ENCODE measurements at regions of chr4 and their contacts with region 1.

Region 1: GRCh38 chr4:90099812-90100211 is 27.4 kb upstream of the CCSER1 start:
- DNase-seq: no peak
- ATAC-seq: peak; percentile 97
- H3K4me3 Mint-ChIP-seq: no peak overlapping the region
- H3K27ac Mint-ChIP-seq: peak overlapping the region; percentile 79
- H3K4me1 Mint-ChIP-seq: peaks cover 18% of the 10 kb centered on the region
- H3K27me3 Mint-ChIP-seq: peaks cover under 1% of the 10 kb centered on the region
- CTCF ChIP-seq: no peak

Region 2: DNA sequence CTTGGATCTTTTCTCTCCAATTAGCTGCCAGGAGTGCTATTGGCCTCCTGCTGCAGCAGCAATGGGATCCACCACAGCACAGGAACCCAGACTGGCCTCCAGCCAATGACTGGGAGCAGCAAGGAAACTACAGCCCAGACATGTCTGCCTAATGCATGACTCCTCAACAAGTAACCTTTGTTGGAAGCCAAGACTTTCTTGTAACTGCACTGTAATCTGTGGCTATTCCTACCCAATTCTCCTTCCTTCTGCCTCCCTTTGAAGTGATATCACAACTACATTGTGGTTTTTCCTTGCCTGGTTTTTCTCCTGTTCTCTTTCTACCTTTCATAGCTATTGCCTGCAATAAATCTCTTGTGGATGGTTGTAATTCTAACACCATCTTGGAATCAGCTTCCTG is 302.7 kb before region 1 on chr4:
- CTCF ChIA-PET with region 1: no interaction called
- POLR2A ChIA-PET with region 1: no interaction called
- intact Hi-C with region 1: no loop called
- DNase-seq: no peak
- ATAC-seq: no peak
- H3K4me3 Mint-ChIP-seq: no peak overlapping the region
- H3K27ac Mint-ChIP-seq: no peak overlapping the region
- H3K4me1 Mint-ChIP-seq: no peaks in the 10 kb centered on the region
- H3K27me3 Mint-ChIP-seq: no peaks in the 10 kb centered on the region
- CTCF ChIP-seq: no peak

Region 3: GRCh38 chr4:90080116-90080515 is 19.7 kb before region 1 on chr4:
- CTCF ChIA-PET with region 1: no interaction called
- POLR2A ChIA-PET with region 1: no interaction called
- intact Hi-C with region 1: no loop called
- DNase-seq: no peak
- ATAC-seq: no peak
- H3K4me3 Mint-ChIP-seq: no peak overlapping the region
- H3K27ac Mint-ChIP-seq: no peak overlapping the region
- H3K4me1 Mint-ChIP-seq: peaks cover 13% of the 10 kb centered on the region
- H3K27me3 Mint-ChIP-seq: peaks cover 1% of the 10 kb centered on the region
- CTCF ChIP-seq: no peak

Region 4: GRCh38 chr4:90127223-90127705 is 27.5 kb after region 1 on chr4 and contains the start of gene CCSER1:
- CTCF ChIA-PET with region 1: no interaction called
- POLR2A ChIA-PET with region 1: interaction called, 11 read pairs
- intact Hi-C with region 1: loop called (anchors 1 kb)
- DNase-seq: peak; percentile 78
- ATAC-seq: peak; percentile 89
- H3K4me3 Mint-ChIP-seq: peak within 1 kb of the TSS; percentile 96
- H3K27ac Mint-ChIP-seq: peak within 1 kb of the TSS; percentile 95
- H3K4me1 Mint-ChIP-seq: peaks cover 21% of the 10 kb centered on the region
- H3K27me3 Mint-ChIP-seq: peaks cover 2% of the 10 kb centered on the region
- CTCF ChIP-seq: no peak
- total RNA-seq, gene CCSER1: 14.4 and 20.1 TPM in 2 replicates